ENCODE measurements at regions of chr20 and their contacts with region 1.

Region 1: GRCh38 chr20:1619861-1620444 is at the start of gene SIRPB1:
- DNase-seq: peak; percentile 27
- ATAC-seq: peak; percentile 50
- H3K4me3 Mint-ChIP-seq: no peak within 1 kb of the TSS
- H3K27ac Mint-ChIP-seq: peak within 1 kb of the TSS; percentile 37
- H3K4me1 Mint-ChIP-seq: peaks cover 61% of the 10 kb centered on the region
- H3K27me3 Mint-ChIP-seq: no peaks in the 10 kb centered on the region
- total RNA-seq, gene SIRPB1: 1.0 to 2.1 TPM

Region 2: DNA sequence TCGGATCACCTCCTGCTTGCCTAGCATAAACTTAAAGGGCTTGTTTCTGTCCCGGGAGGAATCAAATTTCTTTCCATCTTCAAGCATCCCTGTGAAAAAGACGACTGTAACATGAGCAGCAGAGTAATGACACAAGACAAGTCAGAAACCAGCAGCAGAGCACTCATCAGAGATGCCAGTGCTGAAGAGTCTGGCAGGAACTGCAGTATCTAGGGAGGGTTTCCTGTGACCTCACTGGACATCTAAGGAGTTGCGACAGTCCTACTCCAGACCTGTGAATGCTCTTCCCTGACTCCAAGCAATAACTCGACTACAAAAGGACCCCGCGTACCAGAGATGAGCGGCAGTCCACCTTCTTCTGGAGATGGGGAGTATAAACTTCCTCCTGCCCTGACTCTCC is 244.4 kb before region 1 on chr20:
- CTCF ChIA-PET with region 1: no interaction called
- POLR2A ChIA-PET with region 1: no interaction called
- intact Hi-C with region 1: no loop called
- DNase-seq: no peak
- ATAC-seq: no peak
- H3K4me3 Mint-ChIP-seq: no peak overlapping the region
- H3K27ac Mint-ChIP-seq: peak overlapping the region; percentile 75
- H3K4me1 Mint-ChIP-seq: peaks cover 57% of the 10 kb centered on the region
- H3K27me3 Mint-ChIP-seq: no peaks in the 10 kb centered on the region

Region 3: DNA sequence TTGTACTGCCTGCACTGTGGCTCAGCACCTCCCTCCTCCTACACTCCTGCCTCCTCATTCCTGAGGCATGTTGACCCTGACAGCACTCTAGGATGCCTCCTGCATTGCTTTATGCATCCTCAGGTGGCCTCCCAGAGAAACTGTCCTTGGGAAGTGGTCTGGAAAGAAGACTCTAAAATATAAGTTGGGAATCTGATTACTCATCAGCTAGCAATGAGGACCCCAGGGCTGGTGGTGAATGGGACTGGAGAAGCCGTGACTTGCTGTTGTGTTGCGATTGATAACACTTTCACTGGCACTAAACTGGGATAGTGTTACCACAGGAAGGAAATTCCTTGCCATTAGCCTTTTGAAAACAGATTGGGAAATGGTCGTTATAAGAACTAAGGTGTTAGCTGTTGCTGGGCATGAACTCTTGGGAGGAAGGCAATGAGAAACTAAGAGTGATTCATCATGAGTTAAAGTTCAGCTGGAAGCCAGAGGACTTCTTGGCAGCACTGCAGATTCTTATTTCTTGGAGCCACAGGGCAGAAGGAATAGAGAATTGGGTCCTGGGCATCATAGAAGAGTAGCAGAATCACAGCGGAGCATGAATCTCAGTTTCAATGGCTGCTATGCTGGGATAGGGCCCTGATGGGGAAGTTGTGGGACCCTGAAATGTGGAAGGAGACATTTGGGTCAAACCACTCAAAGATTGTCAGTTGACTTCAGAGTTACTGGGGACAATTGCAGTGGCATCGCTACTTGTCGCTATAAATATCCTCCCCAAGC is 52.4 kb before region 1 on chr20:
- CTCF ChIA-PET with region 1: no interaction called
- POLR2A ChIA-PET with region 1: no interaction called
- intact Hi-C with region 1: loop called in 1 of 2 experiments (anchors 5 kb)
- DNase-seq: no peak
- ATAC-seq: no peak
- H3K4me3 Mint-ChIP-seq: no peak overlapping the region
- H3K27ac Mint-ChIP-seq: no peak overlapping the region
- H3K4me1 Mint-ChIP-seq: peaks cover 20% of the 10 kb centered on the region
- H3K27me3 Mint-ChIP-seq: no peaks in the 10 kb centered on the region

Region 4: DNA sequence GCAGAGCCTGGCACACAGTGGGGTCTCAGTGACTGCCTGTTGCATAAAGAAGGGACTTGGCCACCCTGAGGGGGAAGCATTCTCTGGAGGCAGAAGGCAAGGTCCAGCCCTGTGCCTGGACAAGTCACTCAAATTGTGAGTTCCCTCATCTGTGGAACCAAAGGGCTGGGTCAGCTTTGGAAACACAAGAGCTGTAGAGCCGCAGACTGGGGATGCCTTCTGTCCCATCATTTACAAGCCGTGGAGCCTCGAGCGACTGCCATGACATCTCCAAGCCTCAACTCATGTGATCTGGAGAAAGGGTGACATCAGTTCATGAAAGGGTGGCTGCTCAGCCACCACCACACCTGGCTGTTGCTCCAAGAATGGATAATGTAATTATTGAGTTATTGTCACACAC is 42.0 kb before region 1 on chr20:
- CTCF ChIA-PET with region 1: interaction called, 3 read pairs
- POLR2A ChIA-PET with region 1: no interaction called
- intact Hi-C with region 1: loop called in 1 of 2 experiments (anchors 2 kb)
- DNase-seq: no peak
- ATAC-seq: no peak
- H3K4me3 Mint-ChIP-seq: no peak overlapping the region
- H3K27ac Mint-ChIP-seq: no peak overlapping the region
- H3K4me1 Mint-ChIP-seq: peaks cover 3% of the 10 kb centered on the region
- H3K27me3 Mint-ChIP-seq: no peaks in the 10 kb centered on the region

Region 5: DNA sequence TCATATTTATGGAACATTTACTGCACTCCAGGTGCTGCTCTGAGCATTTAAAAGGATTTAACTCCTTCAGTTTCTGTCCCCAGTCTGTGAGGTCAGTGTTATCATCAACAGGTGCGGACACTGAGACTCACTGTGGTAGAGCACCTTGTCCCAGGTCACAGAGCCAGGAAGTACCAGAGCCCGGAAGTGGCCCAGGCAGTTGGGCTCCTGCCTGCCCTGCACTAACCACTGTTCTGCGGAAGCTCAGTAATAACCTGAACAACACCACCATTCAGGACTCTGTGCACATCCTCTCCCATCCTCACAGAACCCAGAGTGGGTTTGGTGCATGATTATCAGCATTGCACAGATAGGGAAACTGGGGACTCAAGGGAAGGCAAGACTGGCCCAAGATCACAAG is 54.4 kb after region 1 on chr20:
- CTCF ChIA-PET with region 1: no interaction called
- POLR2A ChIA-PET with region 1: no interaction called
- intact Hi-C with region 1: no loop called
- DNase-seq: peak; percentile 61
- ATAC-seq: peak; percentile 54
- H3K4me3 Mint-ChIP-seq: peak overlapping the region; percentile 28
- H3K27ac Mint-ChIP-seq: peak overlapping the region; percentile 97
- H3K4me1 Mint-ChIP-seq: peaks cover 95% of the 10 kb centered on the region
- H3K27me3 Mint-ChIP-seq: no peaks in the 10 kb centered on the region

Region 6: GRCh38 chr20:1965520-1966351 is 345.8 kb after region 1 on chr20:
- CTCF ChIA-PET with region 1: no interaction called
- POLR2A ChIA-PET with region 1: no interaction called
- intact Hi-C with region 1: no loop called
- DNase-seq: peak; percentile 93
- ATAC-seq: peak; percentile 93
- H3K4me3 Mint-ChIP-seq: peak overlapping the region; percentile 34
- H3K27ac Mint-ChIP-seq: no peak overlapping the region
- H3K4me1 Mint-ChIP-seq: peaks cover 11% of the 10 kb centered on the region
- H3K27me3 Mint-ChIP-seq: peaks cover 20% of the 10 kb centered on the region

Measured in activated CD4-positive, alpha-beta T cell treated with anti-CD3 and anti-CD28 coated beads for 36 hours (primary cell).